ENCODE measurements at regions of chr14 and their contacts with region 1.

Region 1: DNA sequence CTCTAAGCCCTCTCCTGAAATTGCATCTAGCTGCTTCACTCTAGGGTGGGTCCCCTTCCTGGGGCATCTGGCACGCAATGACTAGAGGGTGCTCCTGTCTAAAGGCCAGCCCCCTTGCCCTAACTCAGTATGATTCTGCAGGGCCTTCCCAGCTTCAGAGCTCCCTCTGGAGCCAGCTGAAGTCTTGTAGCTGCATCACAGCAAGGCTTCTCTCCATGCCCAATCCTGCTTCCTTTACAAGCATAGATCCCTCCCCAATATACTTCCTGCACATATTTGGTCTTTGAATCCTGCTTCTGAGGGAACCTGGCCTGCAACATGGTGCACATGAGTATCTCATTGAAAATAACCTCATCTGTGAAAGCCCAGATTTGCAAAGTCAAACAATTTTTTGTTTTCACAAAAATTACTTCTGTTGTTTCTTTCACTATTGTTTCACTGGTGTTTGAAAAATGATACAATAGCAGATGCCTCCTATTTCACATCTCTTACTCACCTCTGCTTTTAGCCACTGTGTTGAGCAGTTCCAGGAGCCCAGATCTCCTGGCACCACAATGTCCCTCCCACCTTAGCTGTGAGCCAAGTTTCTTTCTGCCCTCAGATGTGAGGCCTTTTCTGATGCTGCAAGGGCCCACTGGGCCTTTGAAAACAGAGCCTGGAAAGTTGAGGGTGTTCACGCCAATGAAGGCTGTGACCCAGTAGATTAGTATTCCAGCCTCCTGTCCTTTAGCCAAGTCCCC is 169.5 kb upstream of the EGLN3 start:
- DNase-seq: no peak
- H3K4me3 ChIP-seq: no peak overlapping the region
- H3K27ac ChIP-seq: no peak overlapping the region
- H3K27me3 ChIP-seq: peaks cover 0 to 5% (median 0%) of the 10 kb centered on the region in 45 donors
- CTCF ChIP-seq: no peak

Region 2: DNA sequence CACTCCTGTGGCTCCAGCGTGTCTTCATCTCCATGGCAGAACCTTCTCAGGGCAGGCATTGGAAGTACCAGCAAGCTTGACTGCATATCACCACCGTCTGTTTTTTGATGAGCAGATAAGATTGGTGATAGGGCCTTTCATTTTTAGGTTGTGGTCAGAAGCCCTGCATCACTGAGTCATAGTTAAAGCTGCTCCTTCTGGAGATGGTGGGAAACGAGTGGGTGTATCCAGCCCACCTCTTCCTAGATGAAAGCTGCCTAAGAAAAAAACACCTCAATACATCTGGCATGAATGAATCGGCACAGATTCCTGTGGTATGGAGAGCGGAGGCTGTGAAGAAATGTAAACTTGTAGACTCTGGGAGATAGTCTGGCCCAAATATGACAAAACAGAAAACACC is 79.2 kb after region 1 on chr14:
- intact Hi-C with region 1: loop called in 1 of 2 experiments (anchors 10 kb)
- DNase-seq: no peak
- H3K4me3 ChIP-seq: no peak overlapping the region
- H3K27ac ChIP-seq: no peak overlapping the region
- H3K27me3 ChIP-seq: peaks cover 0 to 2% (median 0%) of the 10 kb centered on the region in 45 donors
- CTCF ChIP-seq: no peak

Measured in dorsolateral prefrontal cortex (tissue), 120 donors.